Ascending aorta (tissue), 2 donors: ENCODE measurements at regions of chr17 and their contacts with region 1.

Region 1: DNA sequence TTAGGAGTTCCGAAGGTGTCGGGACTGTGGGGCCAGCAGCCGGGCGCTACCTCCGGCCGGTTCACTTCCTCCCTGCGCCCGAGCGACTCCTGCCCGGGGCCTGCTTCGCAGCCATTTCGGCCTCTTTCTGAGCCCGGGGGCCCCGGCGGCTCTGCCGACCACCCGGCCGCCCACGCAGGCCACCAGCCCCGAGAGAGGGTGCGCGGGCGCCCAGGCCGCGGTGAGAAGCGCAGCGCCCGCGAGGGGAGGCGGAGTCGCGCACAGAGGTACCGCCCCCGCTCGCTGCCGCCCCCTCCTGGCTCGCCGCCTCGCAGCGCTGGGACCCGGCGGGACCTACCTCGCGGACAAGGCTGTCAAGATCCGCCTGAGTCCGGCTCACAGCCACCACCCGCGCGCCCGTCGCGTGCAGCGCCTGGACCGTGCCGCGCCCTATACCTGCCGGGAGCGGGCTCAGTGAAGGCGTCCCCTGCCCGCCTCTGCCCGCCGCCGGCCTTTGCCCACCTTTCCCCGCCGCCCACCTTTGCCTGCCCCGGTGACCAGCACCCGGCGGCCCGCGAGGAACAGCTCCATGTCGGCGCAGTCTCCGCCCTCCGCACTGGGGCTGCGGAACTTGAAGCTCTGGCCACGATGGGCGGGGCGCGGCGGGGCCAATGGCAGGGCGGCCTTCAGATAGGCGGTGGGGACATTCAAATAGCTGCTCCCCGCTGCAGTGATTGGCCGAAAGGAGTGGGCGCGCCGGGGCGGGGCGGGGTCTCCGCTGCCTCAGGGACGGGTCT is at the start of gene DCXR:
- DNase-seq: peak; percentile 93 to 99
- H3K4me3 ChIP-seq: peak within 1 kb of the TSS; percentile 72 to 75
- H3K27ac ChIP-seq: peak within 1 kb of the TSS; percentile 83 to 93
- H3K4me1 ChIP-seq: peaks cover 12 to 16% of the 10 kb centered on the region in 2 donors
- H3K27me3 ChIP-seq: peaks cover 3% of the 10 kb centered on the region
- CTCF ChIP-seq: peak; percentile 71 to 83 (median 73)
- total RNA-seq, gene DCXR: 160 TPM

Region 2: GRCh38 chr17:82051776-82052637 is 14.7 kb after region 1 on chr17 and contains the starts of genes GPS1 and RFNG:
- intact Hi-C with region 1: no loop called
- DNase-seq: peak in 1 of 2 donors; percentile 80
- H3K4me3 ChIP-seq: peak within 1 kb of the TSS; percentile 83 to 94
- H3K27ac ChIP-seq: peak within 1 kb of the TSS; percentile 11 to 14
- H3K4me1 ChIP-seq: peaks cover 18 to 19% of the 10 kb centered on the region in 2 donors
- H3K27me3 ChIP-seq: no peaks in the 10 kb centered on the region
- CTCF ChIP-seq: no peak
- total RNA-seq, gene GPS1: 42.1 TPM
- total RNA-seq, gene RFNG: 73.7 TPM

Region 3: GRCh38 chr17:82098072-82098821 is 60.9 kb after region 1 on chr17 and contains the start of gene FASN:
- intact Hi-C with region 1: loop called (anchors 1 kb)
- DNase-seq: peak; percentile 62 to 95
- H3K4me3 ChIP-seq: peak within 1 kb of the TSS; percentile 67 to 98
- H3K27ac ChIP-seq: peak within 1 kb of the TSS; percentile 94 to 96
- H3K4me1 ChIP-seq: peaks cover 14 to 16% of the 10 kb centered on the region in 2 donors
- H3K27me3 ChIP-seq: no peaks in the 10 kb centered on the region
- CTCF ChIP-seq: peak; percentile 28 to 51 (median 41)
- total RNA-seq, gene FASN: 90.9 TPM